ENCODE measurements at regions of chr3 and their contacts with region 1.

Region 1: GRCh38 chr3:169759256-169759655 is 5.6 kb downstream of the TERC start:
- DNase-seq: peak; percentile 24
- H3K4me3 Mint-ChIP-seq: no peak overlapping the region
- H3K27ac Mint-ChIP-seq: peak overlapping the region; percentile 62
- H3K4me1 Mint-ChIP-seq: peaks cover 25% of the 10 kb centered on the region
- H3K27me3 Mint-ChIP-seq: no peaks in the 10 kb centered on the region

Region 2: DNA sequence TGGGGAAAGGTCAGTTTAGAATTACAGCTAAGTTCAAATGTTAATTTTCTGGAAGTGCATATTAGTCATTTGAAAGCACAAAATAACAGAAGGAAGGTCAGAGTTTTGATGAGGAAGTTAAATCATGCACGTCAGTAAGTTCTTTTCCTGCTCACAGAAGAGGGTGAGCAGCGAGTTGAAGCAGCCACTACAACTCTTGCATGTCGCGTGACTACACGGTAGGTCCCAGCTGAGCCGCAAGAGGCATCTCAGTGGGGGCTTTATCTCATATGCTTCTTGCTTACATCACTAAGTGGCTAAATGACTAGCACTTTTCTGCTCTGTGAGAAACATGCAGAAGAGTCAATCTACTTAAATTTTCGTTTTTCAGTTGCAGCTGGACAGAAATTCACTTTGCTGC is 186.1 kb after region 1 on chr3:
- CTCF ChIA-PET with region 1: no interaction called
- intact Hi-C with region 1: loop called (anchors 2 kb)
- DNase-seq: peak; percentile 84
- H3K4me3 Mint-ChIP-seq: peak overlapping the region; percentile 30
- H3K27ac Mint-ChIP-seq: peak overlapping the region; percentile 78
- H3K4me1 Mint-ChIP-seq: peaks cover 37% of the 10 kb centered on the region
- H3K27me3 Mint-ChIP-seq: no peaks in the 10 kb centered on the region

Measured in activated naive CD4-positive, alpha-beta T cell treated with anti-CD3 and anti-CD28 coated beads for 36 hours (primary cell).